ENCODE measurements at regions of chr1 and their contacts with region 1.

Region 1: DNA sequence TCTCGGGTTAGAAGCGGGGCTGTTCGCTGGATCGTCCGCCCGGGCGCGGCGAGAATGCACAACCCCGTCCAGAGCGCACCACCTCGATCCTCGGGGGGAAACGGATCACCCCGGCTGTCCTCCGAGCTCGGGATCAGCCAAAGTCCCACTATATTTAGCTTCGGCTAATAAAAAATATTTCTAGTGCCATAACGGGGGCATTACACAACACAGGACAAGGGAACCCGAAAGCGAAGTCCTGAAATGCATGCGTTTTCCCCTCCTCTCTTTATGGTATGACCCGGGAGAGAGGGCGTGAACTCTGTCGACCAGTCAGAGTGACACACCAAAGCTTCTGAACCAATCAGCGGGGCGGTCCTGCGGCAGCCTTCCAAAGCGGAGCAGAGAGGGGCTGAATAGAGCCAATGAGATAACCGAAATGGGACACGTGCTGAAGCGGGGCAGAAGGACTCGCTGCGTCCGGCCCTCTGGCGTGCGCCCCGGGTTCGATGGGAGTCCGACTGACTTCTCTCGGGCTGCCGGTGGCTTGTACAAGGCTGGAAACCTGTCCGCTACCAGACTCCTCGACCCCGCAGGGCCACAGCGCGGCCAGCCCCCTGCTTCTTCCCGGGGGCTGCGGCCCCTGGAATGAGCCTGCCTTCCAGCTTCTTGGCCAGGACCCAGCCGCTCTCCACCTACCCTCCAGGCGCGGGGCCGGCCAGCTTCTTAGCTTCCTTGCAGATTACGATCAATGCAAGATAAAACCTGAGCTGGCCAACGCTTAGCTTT is at the start of gene ALDH4A1:
- DNase-seq: peak; percentile 98
- ATAC-seq: peak; percentile 97
- H3K4me3 ChIP-seq: peak within 1 kb of the TSS; percentile 69 to 81
- H3K27ac ChIP-seq: peak within 1 kb of the TSS; percentile 64
- H3K4me1 ChIP-seq: peaks cover 12 to 18% of the 10 kb centered on the region in 2 experiments
- H3K27me3 ChIP-seq: no peaks in the 10 kb centered on the region
- CTCF ChIP-seq: no peak
- POLR2A ChIP-seq: peak; percentile 57
- RAD21 ChIP-seq: no peak
- total RNA-seq, gene ALDH4A1: 12.6 TPM

Region 2: DNA sequence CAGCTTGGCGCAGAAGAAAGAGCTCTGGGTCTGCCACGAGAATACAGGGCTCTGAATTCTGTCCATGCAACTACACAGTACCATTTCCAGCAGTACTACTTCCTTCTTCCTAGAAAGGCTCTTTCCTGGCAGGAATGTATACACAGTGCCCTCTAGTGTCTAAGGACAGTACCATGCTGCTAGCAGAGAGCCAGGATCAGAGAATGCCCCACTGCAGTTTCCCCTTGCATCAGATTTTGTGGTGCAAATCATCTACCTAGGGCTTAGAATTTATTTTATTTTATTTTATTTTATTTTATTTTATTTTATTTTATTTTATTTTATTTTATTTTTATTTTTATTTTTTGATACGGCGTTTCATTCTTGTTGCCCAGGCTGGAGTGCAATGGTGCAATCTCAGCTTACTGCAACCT is 221.3 kb before region 1 on chr1:
- CTCF ChIA-PET with region 1: no interaction called
- POLR2A ChIA-PET with region 1: no interaction called
- RAD21 ChIA-PET with region 1: no interaction called
- intact Hi-C with region 1: no loop called
- DNase-seq: peak; percentile 29
- ATAC-seq: peak; percentile 91
- H3K4me3 ChIP-seq: no peak overlapping the region
- H3K27ac ChIP-seq: no peak overlapping the region
- H3K4me1 ChIP-seq: no peaks in the 10 kb centered on the region; a peak in 2 of 4 replicates
- H3K27me3 ChIP-seq: no peaks in the 10 kb centered on the region
- CTCF ChIP-seq: peak; percentile 61 to 81 (median 72); a peak in 5 of 6 replicates
- POLR2A ChIP-seq: no peak
- RAD21 ChIP-seq: peak; percentile 80

Region 3: GRCh38 chr1:18913065-18913835 is 10.5 kb after region 1 on chr1:
- CTCF ChIA-PET with region 1: interaction called, 38 read pairs
- POLR2A ChIA-PET with region 1: interaction called, 3 read pairs
- RAD21 ChIA-PET with region 1: no interaction called
- intact Hi-C with region 1: no loop called
- DNase-seq: peak; percentile 50
- ATAC-seq: peak; percentile 98
- H3K4me3 ChIP-seq: no peak overlapping the region
- H3K27ac ChIP-seq: no peak overlapping the region
- H3K4me1 ChIP-seq: peaks cover 0 to 8% of the 10 kb centered on the region in 2 experiments; a peak in 1 of 4 replicates
- H3K27me3 ChIP-seq: no peaks in the 10 kb centered on the region
- CTCF ChIP-seq: peak; percentile 100
- POLR2A ChIP-seq: no peak
- RAD21 ChIP-seq: peak; percentile 97

Region 4: GRCh38 chr1:18972531-18972930 is 69.8 kb after region 1 on chr1:
- CTCF ChIA-PET with region 1: interaction called, 13 read pairs
- POLR2A ChIA-PET with region 1: interaction called, 3 read pairs
- RAD21 ChIA-PET with region 1: no interaction called
- intact Hi-C with region 1: loop called (anchors 2 kb)
- DNase-seq: no peak
- ATAC-seq: peak; percentile 34
- H3K4me3 ChIP-seq: no peak overlapping the region
- H3K27ac ChIP-seq: no peak overlapping the region
- H3K4me1 ChIP-seq: peaks cover 13 to 26% of the 10 kb centered on the region in 2 experiments
- H3K27me3 ChIP-seq: no peaks in the 10 kb centered on the region
- CTCF ChIP-seq: peak; percentile 12 to 72 (median 39); a peak in 4 of 6 replicates
- POLR2A ChIP-seq: no peak
- RAD21 ChIP-seq: peak; percentile 62

Region 5: GRCh38 chr1:19096036-19096833 is 193.5 kb after region 1 on chr1:
- CTCF ChIA-PET with region 1: interaction called, 7 read pairs
- POLR2A ChIA-PET with region 1: no interaction called
- RAD21 ChIA-PET with region 1: interaction called in 1 of 2 experiments, 4 read pairs
- intact Hi-C with region 1: loop called (anchors 1 kb)
- DNase-seq: peak; percentile 6
- ATAC-seq: peak; percentile 87
- H3K4me3 ChIP-seq: no peak overlapping the region
- H3K27ac ChIP-seq: no peak overlapping the region
- H3K4me1 ChIP-seq: no peaks in the 10 kb centered on the region
- H3K27me3 ChIP-seq: no peaks in the 10 kb centered on the region
- CTCF ChIP-seq: peak; percentile 51 to 81 (median 55)
- POLR2A ChIP-seq: no peak
- RAD21 ChIP-seq: peak; percentile 82

Region 6: DNA sequence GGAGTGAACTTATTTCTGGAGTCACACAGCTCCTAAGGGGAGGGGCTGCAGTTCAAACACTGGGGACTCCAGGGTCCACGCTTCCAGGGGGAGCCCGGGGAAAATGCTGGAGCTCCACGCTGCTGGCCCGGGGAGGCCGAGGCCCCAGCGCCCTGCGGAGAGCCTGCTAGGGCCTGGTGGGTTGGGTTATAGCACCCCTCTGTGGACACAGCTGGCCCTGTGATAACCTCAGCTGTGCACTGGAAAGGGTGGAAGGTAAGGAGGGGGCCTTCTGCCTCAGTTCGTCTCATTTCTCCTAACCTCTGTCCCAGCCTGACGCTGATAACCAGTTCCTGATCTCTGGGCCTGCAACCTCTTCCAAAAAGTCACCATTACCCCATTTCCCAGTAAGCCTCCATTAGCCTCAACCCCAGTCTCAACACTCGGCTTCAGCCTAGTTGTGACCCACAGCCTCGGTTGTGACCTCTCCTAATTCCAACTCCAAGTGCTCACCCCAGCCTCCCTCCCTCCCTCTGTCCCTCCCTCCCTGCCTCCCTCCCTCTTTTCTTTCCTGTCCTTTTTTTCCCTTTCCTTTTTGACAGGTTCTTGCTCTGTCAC is 748.5 kb after region 1 on chr1:
- CTCF ChIA-PET with region 1: no interaction called
- POLR2A ChIA-PET with region 1: no interaction called
- RAD21 ChIA-PET with region 1: no interaction called
- intact Hi-C with region 1: loop called (anchors 10 kb)
- DNase-seq: no peak
- ATAC-seq: peak; percentile 53
- H3K4me3 ChIP-seq: no peak overlapping the region
- H3K27ac ChIP-seq: no peak overlapping the region
- H3K4me1 ChIP-seq: peaks cover 17 to 42% of the 10 kb centered on the region in 2 experiments
- H3K27me3 ChIP-seq: no peaks in the 10 kb centered on the region
- CTCF ChIP-seq: peak; percentile 49 to 66 (median 55); a peak in 5 of 6 replicates
- POLR2A ChIP-seq: no peak
- RAD21 ChIP-seq: peak; percentile 82